T-cell (primary cell): ENCODE measurements at regions of chr10 and their contacts with region 1.

Region 1: DNA sequence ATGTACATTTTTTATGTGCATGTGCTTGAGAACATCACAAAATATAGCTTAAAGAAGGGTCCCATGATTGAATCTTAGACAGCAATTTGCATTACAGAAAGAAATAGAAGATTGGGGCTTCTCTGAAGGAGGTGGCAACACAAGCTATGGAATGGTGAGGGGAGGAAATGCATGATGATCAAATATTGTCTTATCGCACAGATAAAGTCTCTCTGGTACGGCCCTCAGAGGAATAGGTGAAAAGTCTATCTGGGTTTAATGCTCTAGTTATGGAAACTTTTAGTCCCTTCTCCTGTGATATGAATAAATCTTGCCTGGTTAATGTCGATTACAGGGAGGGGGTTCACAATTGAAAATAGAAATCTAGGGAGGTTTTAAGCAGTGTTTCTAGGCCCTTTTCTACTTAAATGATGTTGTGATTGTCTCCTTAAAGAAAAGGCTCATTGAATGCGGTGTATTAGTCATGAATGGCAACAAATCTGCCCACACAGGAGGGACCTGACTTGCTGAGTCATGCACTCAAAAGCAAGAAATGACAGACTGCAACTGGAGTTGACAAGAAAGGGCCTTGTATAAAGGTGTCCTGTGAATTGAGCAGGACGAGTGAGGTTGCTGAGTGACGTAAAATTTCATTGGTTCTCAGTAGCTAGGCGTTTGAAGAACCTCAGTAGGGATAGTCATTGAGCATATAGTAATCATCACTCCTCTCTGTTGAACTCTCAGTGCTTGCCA is 133.4 kb upstream of the CSTF2T start:
- DNase-seq: no peak
- ATAC-seq: no peak
- H3K4me3 ChIP-seq: no peak overlapping the region
- H3K4me3 Mint-ChIP-seq: no peak overlapping the region
- H3K27ac ChIP-seq: no peak overlapping the region
- H3K27ac Mint-ChIP-seq: no peak overlapping the region
- H3K4me1 ChIP-seq: no peaks in the 10 kb centered on the region
- H3K4me1 Mint-ChIP-seq: no peaks in the 10 kb centered on the region
- H3K27me3 ChIP-seq: no peaks in the 10 kb centered on the region
- H3K27me3 Mint-ChIP-seq: peaks cover 0 to 3% of the 10 kb centered on the region in 2 donors

Region 2: GRCh38 chr10:51892965-51893658 is 60.3 kb after region 1 on chr10:
- CTCF ChIA-PET with region 1: no interaction called
- POLR2A ChIA-PET with region 1: no interaction called
- DNase-seq: peak in 1 of 35 experiments; percentile 1
- ATAC-seq: no peak
- H3K4me3 ChIP-seq: no peak overlapping the region
- H3K4me3 Mint-ChIP-seq: no peak overlapping the region
- H3K27ac ChIP-seq: no peak overlapping the region
- H3K27ac Mint-ChIP-seq: no peak overlapping the region
- H3K4me1 ChIP-seq: no peaks in the 10 kb centered on the region
- H3K4me1 Mint-ChIP-seq: no peaks in the 10 kb centered on the region
- H3K27me3 ChIP-seq: no peaks in the 10 kb centered on the region
- H3K27me3 Mint-ChIP-seq: peaks cover 0 to 9% of the 10 kb centered on the region in 2 donors

Region 3: GRCh38 chr10:52146766-52147165 is 313.9 kb after region 1 on chr10:
- CTCF ChIA-PET with region 1: no interaction called
- POLR2A ChIA-PET with region 1: interaction called in 1 of 2 experiments, 14 read pairs
- DNase-seq: no peak
- ATAC-seq: no peak
- H3K4me3 ChIP-seq: no peak overlapping the region
- H3K4me3 Mint-ChIP-seq: no peak overlapping the region
- H3K27ac ChIP-seq: no peak overlapping the region
- H3K27ac Mint-ChIP-seq: no peak overlapping the region
- H3K4me1 ChIP-seq: no peaks in the 10 kb centered on the region
- H3K4me1 Mint-ChIP-seq: no peaks in the 10 kb centered on the region
- H3K27me3 ChIP-seq: no peaks in the 10 kb centered on the region
- H3K27me3 Mint-ChIP-seq: no peaks in the 10 kb centered on the region

Region 4: GRCh38 chr10:52420656-52421055 is 587.8 kb after region 1 on chr10:
- CTCF ChIA-PET with region 1: no interaction called
- POLR2A ChIA-PET with region 1: no interaction called
- DNase-seq: no peak
- ATAC-seq: no peak
- H3K4me3 ChIP-seq: no peak overlapping the region
- H3K4me3 Mint-ChIP-seq: no peak overlapping the region
- H3K27ac ChIP-seq: no peak overlapping the region
- H3K27ac Mint-ChIP-seq: no peak overlapping the region
- H3K4me1 ChIP-seq: no peaks in the 10 kb centered on the region
- H3K4me1 Mint-ChIP-seq: no peaks in the 10 kb centered on the region
- H3K27me3 ChIP-seq: no peaks in the 10 kb centered on the region
- H3K27me3 Mint-ChIP-seq: no peaks in the 10 kb centered on the region